OCI-LY7 (cell line): ENCODE measurements at regions of chr6 and their contacts with region 1.

Region 1: DNA sequence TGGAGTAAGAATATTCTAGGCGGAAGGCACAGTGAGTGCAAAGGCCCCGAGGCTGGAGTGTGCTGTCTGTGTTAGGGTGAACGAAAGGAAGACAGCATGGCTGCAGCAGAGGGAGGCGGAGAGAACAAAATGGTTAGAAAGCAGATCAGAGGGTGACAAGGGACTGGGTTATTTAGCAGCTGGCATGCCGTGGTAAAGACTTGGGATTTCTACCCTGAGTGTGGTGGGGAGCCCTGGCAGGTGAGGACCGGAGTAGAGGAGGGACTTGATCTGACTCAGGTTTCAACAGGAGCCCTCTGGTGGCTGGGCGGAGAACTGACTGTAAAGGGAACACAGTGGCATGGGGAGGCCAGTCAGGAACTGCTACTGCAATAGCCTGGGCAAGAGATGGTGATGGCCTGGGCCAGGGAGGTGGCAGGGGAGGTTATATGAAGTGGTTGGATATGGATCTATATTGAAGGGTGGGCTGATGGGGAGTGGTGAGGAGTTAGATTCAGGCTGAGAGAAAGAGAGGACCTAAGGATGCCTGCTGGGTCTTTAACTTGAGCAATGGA is 38.0 kb downstream of the PIM1 start:
- DNase-seq: peak; percentile 81
- H3K4me3 ChIP-seq: no peak overlapping the region
- H3K27ac ChIP-seq: no peak overlapping the region
- H3K4me1 ChIP-seq: no peaks in the 10 kb centered on the region
- CTCF ChIP-seq: peak; percentile 88

Region 2: GRCh38 chr6:36765594-36766398 is 442.2 kb before region 1 on chr6:
- CTCF ChIA-PET with region 1: no interaction called
- POLR2A ChIA-PET with region 1: no interaction called
- intact Hi-C with region 1: loop called (anchors 5 kb)
- DNase-seq: peak; percentile 91
- H3K4me3 ChIP-seq: peak overlapping the region; percentile 2
- H3K27ac ChIP-seq: peak overlapping the region; percentile 4
- H3K4me1 ChIP-seq: peaks cover 45% of the 10 kb centered on the region
- CTCF ChIP-seq: peak; percentile 99

Region 3: DNA sequence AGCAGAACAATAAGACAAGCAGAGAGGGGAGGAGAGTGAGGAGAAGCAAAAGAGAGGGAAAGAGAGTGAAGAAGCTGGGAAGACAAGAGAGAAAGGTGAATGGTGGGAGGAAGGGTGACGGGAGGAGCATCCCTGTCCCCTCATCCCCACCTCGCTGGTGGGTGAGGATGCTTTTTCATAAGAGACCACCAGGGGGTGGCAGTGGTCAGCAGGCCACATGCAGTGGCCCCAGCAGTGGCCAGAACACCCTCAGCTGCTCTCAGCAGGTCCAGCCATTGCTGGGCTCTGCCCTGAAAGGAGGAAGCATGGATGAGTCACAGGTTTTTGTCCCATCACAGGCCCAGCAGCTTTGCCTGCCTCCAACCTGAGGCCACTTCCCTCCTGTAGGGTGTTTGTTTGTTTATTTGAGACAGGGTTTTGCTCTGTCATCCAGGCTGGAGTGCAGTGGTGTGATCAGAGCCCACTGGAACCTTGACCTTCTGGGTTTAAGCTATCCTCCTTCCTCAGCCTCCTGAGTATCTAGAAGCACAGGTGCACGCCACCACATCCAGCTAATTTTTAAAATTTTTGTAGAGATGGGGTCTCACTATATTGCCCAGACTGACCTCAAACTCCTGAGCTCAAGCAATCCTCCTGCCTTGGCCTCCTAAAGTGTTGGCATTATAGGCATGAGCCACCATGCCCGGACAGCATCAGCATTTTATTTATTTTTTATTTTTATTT is 178.6 kb before region 1 on chr6:
- CTCF ChIA-PET with region 1: interaction called, 6 read pairs
- POLR2A ChIA-PET with region 1: no interaction called
- intact Hi-C with region 1: loop called (anchors 1 kb)
- DNase-seq: peak; percentile 60
- H3K4me3 ChIP-seq: no peak overlapping the region
- H3K27ac ChIP-seq: no peak overlapping the region
- H3K4me1 ChIP-seq: no peaks in the 10 kb centered on the region
- CTCF ChIP-seq: peak; percentile 76

Region 4: DNA sequence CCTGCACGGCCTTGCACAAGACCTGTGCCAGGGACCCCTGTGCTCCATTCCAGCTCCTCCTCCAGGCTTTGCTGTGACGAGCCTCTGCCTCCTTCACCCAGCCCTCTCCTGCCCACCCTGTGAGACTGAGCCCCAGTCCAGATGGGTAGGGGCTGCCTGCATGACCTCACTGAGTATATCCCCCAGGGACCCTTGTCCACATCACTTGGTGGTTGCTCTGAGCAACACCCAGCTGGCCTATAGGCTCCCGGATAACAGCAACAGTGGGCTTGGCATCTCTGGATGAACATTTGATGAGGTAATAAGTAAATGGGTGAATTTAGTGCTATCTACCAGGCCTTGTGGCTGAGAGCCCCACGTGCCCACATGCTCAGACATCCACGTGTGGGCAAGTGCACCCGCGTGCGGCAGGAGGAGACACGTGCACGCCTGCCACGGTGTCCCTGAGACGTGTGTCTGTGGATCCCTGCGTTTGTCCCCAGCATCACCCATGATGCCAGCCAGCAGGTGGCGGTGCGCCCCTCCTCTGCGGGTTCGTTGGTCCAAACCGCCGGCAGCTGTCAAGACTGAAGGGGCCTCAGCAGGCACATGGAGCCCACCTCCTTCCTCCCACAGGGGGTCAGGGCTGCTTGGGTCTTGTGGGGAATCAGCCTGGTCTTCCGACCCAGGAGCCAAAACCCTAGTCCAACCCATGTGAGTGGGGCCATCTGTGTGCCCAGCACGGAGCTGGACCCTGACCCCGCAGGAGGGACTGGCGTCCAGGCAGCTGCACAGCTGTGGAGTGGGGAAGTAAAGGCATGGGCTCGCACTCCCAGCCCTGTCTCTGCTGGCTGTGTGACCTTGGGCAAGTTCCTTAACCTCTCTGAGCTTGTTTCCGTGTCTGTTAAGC is 156.6 kb before region 1 on chr6:
- CTCF ChIA-PET with region 1: no interaction called
- POLR2A ChIA-PET with region 1: no interaction called
- intact Hi-C with region 1: loop called (anchors 1 kb)
- DNase-seq: peak; percentile 92
- H3K4me3 ChIP-seq: no peak overlapping the region
- H3K27ac ChIP-seq: no peak overlapping the region
- H3K4me1 ChIP-seq: peaks cover 41% of the 10 kb centered on the region
- CTCF ChIP-seq: peak; percentile 94